CD4-positive, alpha-beta T cell (primary cell): ENCODE measurements at regions of chr18 and their contacts with region 1.

Region 1: DNA sequence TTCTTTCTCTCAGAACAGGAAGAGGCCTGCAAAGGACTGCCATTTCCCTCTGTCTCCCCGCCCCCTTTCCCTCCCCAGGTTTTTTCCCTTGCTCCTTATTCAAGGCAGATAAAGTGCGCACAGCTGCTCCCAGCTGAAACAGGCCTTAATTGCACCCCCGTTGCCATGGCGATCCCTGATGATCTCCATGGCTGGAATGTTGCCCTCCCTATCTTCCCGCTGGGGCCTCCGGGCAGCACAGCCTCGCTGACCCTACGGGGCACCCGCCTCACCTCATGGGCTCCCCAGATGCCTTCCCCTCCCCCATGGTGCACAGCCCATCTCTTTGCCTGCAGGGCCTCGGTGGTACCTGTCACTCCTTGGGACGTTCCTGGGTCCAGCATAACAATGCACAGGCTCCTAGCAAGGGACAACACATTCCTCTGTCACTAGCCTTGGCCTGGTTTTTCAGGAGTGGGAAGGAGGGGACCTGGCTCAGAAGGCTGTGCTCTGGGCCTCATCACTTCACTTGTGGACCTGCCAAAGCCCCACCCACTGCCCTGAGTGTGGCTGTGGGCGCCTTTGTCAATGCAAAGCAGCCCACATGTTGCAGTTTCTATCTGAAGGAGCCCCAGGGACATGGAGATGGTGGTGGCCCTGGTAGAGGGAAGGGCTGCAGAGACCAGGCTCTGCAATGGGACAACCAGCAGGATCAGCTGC is 115.0 kb downstream of the CELF4 start:
- DNase-seq: no peak
- ATAC-seq: no peak
- H3K4me3 ChIP-seq: no peak overlapping the region
- H3K4me3 Mint-ChIP-seq: no peak overlapping the region
- H3K27ac ChIP-seq: no peak overlapping the region
- H3K27ac Mint-ChIP-seq: no peak overlapping the region
- H3K4me1 ChIP-seq: no peaks in the 10 kb centered on the region
- H3K4me1 Mint-ChIP-seq: no peaks in the 10 kb centered on the region
- H3K27me3 ChIP-seq: no peaks in the 10 kb centered on the region
- H3K27me3 Mint-ChIP-seq: peaks cover 5% of the 10 kb centered on the region
- CTCF ChIP-seq: no peak

Region 2: GRCh38 chr18:37516361-37516853 is 65.8 kb after region 1 on chr18:
- CTCF ChIA-PET with region 1: no interaction called
- POLR2A ChIA-PET with region 1: no interaction called
- intact Hi-C with region 1: loop called in 1 of 2 experiments (anchors 10 kb)
- DNase-seq: no peak
- ATAC-seq: no peak
- H3K4me3 ChIP-seq: no peak overlapping the region
- H3K4me3 Mint-ChIP-seq: no peak overlapping the region
- H3K27ac ChIP-seq: no peak overlapping the region
- H3K27ac Mint-ChIP-seq: no peak overlapping the region
- H3K4me1 ChIP-seq: no peaks in the 10 kb centered on the region
- H3K4me1 Mint-ChIP-seq: no peaks in the 10 kb centered on the region
- H3K27me3 ChIP-seq: no peaks in the 10 kb centered on the region
- H3K27me3 Mint-ChIP-seq: peaks cover 7% of the 10 kb centered on the region
- CTCF ChIP-seq: no peak